Gastrocnemius medialis (tissue), 4 donors: ENCODE measurements at regions of chr19 and their contacts with region 1.

Region 1: DNA sequence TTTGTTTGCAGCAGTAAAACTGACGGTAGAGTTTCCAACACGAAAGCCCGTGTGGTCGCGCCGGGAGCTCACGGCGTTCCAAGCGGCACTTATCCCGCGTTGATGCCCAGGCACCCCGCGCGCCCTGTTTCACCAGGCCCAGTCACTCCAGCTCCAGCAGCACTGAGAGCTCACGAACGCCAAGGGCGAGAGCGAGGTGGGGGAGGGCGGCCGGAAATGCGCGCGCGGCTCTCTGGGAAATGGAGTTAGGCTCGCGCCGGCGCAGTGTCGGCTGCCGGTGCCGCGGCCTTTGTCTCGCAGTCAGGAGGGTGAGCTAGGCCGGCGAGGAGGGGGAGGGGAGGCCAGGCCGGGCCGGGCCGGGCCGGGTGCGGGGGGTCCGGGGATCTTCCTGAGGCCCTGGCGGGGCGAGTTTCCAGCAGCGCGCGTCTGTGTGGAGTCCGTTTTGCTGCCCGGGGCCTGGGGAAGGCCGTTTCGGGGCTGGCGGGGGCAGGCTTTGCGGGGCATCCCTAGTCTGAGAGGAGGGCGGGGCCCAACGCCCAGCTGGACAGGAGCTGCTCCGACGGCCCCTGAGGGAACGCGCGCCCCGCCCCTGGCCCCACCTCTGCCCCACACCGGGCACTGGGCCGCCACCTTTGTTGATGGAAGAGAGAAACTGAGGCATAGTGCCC is at the start of gene ZNF135:
- DNase-seq: peak; percentile 42 to 64
- ATAC-seq: peak; percentile 78 to 86
- H3K4me3 ChIP-seq: peak within 1 kb of the TSS; percentile 56 to 85 (median 72)
- H3K27ac ChIP-seq: peak within 1 kb of the TSS; percentile 80 to 89 (median 84)
- H3K4me1 ChIP-seq: no peaks in the 10 kb centered on the region
- H3K27me3 ChIP-seq: peaks cover 0 to 9% (median 0%) of the 10 kb centered on the region in 3 donors
- CTCF ChIP-seq: no peak
- POLR2A ChIP-seq: no peak
- total RNA-seq, gene ZNF135: 0.36 to 0.73 (median 0.53) TPM

Region 2: DNA sequence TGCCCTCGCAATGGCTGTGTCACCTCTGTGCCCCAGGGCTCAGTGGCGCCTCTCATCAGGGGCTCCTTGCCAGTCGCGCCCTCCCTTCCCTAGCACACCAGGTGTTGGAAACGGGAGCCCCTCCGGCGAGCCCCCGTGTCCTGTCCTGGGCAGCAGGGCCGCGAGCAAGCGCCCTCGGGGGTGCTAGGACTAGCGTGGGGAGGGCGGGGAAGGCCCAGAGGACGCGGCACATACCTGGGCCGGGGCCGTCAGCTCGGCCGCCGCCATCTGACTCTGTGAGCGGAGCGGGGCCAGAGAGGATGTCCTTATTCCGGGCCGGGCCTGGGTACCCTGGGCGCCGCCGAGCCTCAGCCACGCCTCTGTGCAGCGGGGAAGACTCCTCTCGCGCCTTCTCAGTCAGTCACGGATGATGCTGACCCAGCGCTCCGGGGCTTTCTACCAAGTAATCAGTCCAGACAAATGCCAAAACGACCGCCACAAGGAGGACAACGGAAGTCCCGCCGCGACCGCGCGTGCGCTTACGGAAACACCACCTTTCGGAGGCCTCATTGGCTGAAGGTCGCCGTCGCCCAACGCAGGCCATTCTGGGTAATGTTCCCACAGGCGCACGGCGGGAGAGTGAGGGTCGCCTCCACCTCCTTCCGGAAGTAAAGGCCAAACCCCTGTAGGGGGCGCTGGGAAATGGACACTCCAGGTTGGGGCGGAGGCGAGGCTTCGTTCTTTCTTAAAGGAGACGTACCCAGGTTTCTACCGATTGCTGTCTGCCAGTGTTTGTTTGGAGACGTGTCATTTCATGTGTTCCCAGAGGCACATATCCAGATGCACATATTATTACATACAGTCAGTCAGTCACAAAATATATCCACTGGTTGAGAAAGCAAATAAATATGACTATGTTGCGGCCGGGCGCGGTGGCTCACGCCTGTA is 111.7 kb before region 1 on chr19 and contains the start of gene ZNF256:
- in situ Hi-C with region 1: no loop called
- intact Hi-C with region 1: loop called (anchors 1 kb)
- DNase-seq: peak; percentile 87 to 95
- ATAC-seq: peak; percentile 96 to 99
- H3K4me3 ChIP-seq: peak within 1 kb of the TSS; percentile 77 to 99 (median 93)
- H3K27ac ChIP-seq: peak within 1 kb of the TSS; percentile 78 to 88 (median 85)
- H3K4me1 ChIP-seq: peaks cover 7 to 8% of the 10 kb centered on the region in 2 donors
- H3K27me3 ChIP-seq: no peaks in the 10 kb centered on the region
- CTCF ChIP-seq: peak; percentile 32 to 67 (median 62)
- POLR2A ChIP-seq: peak in 1 of 2 donors; percentile 25
- total RNA-seq, gene ZNF256: 0.93 to 2.6 (median 1.4) TPM

Region 3: GRCh38 chr19:58097781-58098681 is 38.9 kb after region 1 on chr19 and contains the start of gene ZSCAN18:
- in situ Hi-C with region 1: no loop called
- intact Hi-C with region 1: loop called (anchors 1 kb)
- DNase-seq: peak; percentile 89 to 92
- ATAC-seq: peak; percentile 98 to 99
- H3K4me3 ChIP-seq: peak within 1 kb of the TSS; percentile 85 to 99 (median 98)
- H3K27ac ChIP-seq: peak within 1 kb of the TSS; percentile 83 to 89 (median 86)
- H3K4me1 ChIP-seq: peaks cover 5 to 9% of the 10 kb centered on the region in 2 donors
- H3K27me3 ChIP-seq: no peaks in the 10 kb centered on the region
- CTCF ChIP-seq: no peak
- POLR2A ChIP-seq: peak; percentile 28 to 35
- total RNA-seq, gene ZSCAN18: 11.2 to 20.6 (median 15.2) TPM